HEK293 (cell line): ENCODE measurements at regions of chr17 and their contacts with region 1.

Region 1: GRCh38 chr17:56715613-56716357 is 117.9 kb downstream of the C17orf67 start:
- H3K4me3 ChIP-seq: no peak overlapping the region
- H3K27ac ChIP-seq: no peak overlapping the region
- H3K4me1 ChIP-seq: no peaks in the 10 kb centered on the region
- CTCF ChIP-seq: peak; percentile 52; the same call in 1 of the 2 replicates

Region 2: DNA sequence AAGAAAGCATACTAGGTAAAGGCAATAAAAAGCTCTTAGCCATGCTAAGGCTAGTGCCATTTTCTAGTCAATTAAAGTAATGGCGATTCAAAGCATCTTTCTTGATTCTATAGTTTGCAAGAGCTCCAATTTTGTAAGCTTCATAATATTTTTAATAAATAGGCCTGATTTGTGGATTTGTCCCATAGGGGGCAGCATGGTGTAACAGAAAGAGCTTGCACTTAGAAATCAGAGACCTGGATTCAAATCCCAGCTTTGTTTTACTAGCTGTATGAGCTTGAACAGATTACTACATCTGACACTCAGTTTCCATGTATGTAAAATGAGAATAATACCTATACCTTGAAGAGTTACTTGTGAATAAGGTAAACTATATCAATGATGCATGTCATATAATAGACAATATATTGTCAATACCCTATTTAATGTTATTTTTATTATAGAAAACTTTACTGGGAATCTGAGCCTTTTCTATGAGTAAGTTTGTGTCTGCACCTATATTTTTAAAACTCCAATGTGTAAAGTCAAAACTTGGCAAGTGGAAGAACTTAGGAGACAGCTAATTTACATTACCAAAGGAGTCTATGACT is 215.9 kb before region 1 on chr17:
- CTCF ChIA-PET with region 1: interaction called, 142 read pairs
- POLR2A ChIA-PET with region 1: interaction called, 4 read pairs
- H3K4me3 ChIP-seq: no peak overlapping the region
- H3K27ac ChIP-seq: no peak overlapping the region
- H3K4me1 ChIP-seq: no peaks in the 10 kb centered on the region
- CTCF ChIP-seq: no peak

Region 3: DNA sequence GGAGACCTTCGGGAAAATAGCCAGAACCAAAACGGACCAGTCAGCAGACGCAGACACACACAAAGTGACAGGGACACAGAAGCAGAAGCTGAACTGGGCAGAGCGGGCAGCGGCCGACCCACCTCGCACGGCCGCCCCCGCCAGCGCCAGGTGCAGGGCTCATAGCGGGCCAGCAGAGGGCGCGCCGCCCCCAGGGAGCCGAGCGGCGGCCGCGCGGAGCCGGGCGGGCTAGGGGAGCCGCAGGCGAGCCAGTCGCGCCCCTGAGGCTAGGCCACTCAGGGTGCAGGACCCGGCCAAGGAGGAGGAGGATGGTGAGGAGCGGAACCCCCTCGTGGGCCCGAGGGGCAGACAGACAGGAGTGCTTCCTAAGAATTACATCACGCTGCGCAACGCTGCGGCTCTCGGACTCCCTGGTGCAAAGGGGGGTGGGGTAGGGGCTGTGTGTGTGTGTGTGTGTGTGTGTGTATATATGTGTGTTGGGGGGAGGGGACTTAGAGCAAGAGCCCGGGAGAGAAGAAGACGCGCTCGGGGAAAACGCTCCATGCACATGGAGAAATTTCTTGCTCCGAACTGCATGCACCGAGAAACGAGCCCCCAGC is 123.2 kb before region 1 on chr17:
- CTCF ChIA-PET with region 1: interaction called, 173 read pairs
- POLR2A ChIA-PET with region 1: interaction called, 19 read pairs
- H3K4me3 ChIP-seq: peak overlapping the region; percentile 49
- H3K27ac ChIP-seq: peak overlapping the region; percentile 63
- H3K4me1 ChIP-seq: peaks cover 12% of the 10 kb centered on the region
- CTCF ChIP-seq: no peak; the same call in 1 of the 2 replicates

Region 4: DNA sequence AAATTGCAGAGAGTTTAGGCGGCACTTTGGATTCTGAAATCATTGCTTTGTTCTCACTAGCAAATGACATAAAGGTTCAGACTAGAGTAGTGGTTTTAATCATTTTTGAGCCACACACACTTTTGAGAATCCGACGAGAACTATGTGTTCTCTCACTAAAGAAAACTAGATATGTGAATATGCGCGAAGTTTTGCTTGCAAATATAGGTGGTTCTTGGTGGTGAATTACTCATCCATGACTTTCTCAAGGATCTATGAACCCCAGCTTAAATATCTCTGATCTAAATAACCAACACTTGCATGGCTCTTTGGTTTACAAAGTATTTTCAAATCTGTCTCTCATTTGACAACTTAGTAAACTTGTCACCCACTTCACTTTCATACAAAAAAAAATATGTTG is 67.5 kb before region 1 on chr17:
- CTCF ChIA-PET with region 1: interaction called, 47 read pairs
- POLR2A ChIA-PET with region 1: no interaction called
- H3K4me3 ChIP-seq: no peak overlapping the region
- H3K27ac ChIP-seq: no peak overlapping the region
- H3K4me1 ChIP-seq: no peaks in the 10 kb centered on the region
- CTCF ChIP-seq: no peak

Region 5: GRCh38 chr17:56690486-56691291 is 25.1 kb before region 1 on chr17:
- CTCF ChIA-PET with region 1: interaction called, 13 read pairs
- POLR2A ChIA-PET with region 1: no interaction called
- H3K4me3 ChIP-seq: no peak overlapping the region
- H3K27ac ChIP-seq: no peak overlapping the region
- H3K4me1 ChIP-seq: no peaks in the 10 kb centered on the region
- CTCF ChIP-seq: no peak

Region 6: DNA sequence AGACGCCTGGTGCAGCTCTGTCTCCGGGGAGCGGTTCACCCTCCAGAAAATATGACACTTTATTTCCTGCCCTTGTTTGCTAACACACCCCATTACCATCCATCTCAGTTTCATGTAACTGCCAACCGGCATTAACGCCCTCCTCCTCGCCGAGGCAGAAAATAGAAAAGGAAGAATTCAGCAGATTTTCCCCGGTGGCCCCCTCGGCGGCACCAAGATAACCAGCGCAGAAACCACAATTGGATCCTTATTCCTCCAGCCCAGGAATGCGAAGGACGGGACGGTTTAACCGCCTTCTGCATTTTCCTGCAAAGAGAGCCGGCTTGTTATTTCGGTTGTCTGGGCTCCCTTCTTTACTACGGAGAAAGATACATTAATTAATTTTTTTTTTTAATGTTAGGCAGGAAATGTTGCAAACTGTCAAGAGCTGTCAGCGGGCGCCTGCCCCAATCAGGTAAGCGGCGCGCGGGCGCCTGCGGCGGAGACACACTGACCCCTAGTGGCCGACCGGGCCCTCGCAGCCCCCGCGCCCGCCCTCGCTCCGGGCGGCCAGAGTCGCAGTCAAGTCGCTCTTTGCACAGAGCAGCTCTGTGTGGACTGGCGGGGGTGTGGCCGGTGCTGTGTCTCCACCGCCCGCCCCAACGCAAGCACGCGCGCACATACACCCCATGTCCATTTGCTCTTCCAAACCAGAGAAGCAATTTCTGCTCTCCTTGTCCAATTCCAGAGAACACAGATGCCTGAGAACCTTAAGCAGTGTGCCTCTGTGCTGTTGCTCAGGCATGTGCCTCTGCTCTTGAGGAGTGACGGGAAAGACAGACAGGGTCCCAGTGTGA is 64.3 kb after region 1 on chr17:
- CTCF ChIA-PET with region 1: interaction called, 65 read pairs
- POLR2A ChIA-PET with region 1: no interaction called
- H3K4me3 ChIP-seq: peak overlapping the region; percentile 21
- H3K27ac ChIP-seq: no peak overlapping the region
- H3K4me1 ChIP-seq: no peaks in the 10 kb centered on the region; the same call in 1 of the 2 replicates
- CTCF ChIP-seq: peak; percentile 92